ENCODE measurements at regions of chr15 and their contacts with region 1.

Region 1: DNA sequence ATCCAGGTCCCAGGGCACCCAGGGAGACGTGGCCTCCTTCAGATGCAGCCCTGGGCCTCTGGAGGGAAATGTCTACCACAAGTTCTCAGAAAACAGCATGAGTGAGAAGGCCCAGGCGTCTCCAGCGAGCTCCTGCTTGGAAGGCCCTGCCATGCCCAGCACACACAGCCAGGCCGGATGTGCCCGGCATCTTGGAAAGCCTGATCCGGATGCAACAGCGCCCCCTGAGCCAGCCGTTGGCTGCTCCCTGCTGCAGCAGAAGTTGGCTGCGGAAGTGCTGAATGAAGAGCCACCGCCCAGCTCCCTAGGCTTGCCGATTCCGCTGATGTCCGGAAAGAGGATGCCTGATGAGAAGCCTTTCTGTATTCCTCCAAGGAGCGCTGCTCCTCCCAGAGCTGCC is 856 bp downstream of the NPAP1 start:
- DNase-seq: no peak
- H3K4me3 ChIP-seq: no peak overlapping the region
- H3K27ac ChIP-seq: no peak overlapping the region
- H3K4me1 ChIP-seq: no peaks in the 10 kb centered on the region
- H3K27me3 ChIP-seq: no peaks in the 10 kb centered on the region
- CTCF ChIP-seq: no peak
- POLR2A ChIP-seq: no peak

Region 2: DNA sequence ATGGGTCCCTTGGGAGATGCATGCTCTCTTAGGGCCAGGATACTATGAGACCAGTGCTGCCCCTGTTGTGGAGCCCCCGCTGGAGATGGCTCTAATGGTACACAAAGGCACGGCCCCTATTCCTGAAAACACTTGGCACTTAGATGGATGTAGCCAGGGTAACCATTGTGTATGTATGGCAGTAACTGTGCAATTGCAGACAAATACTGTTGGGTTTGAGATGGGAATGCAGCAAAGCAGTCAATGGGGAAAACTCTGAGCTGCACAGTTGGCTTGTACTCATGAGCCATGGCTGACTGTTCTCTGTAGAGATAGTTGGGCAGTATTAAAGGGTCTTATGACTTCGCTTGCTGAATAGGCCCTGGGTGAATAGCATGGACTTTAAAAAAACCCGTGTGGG is 68.8 kb before region 1 on chr15:
- intact Hi-C with region 1: loop called (anchors 2 kb)
- DNase-seq: no peak
- H3K4me3 ChIP-seq: no peak overlapping the region
- H3K27ac ChIP-seq: no peak overlapping the region
- H3K4me1 ChIP-seq: no peaks in the 10 kb centered on the region
- H3K27me3 ChIP-seq: no peaks in the 10 kb centered on the region
- CTCF ChIP-seq: no peak
- POLR2A ChIP-seq: no peak

Region 3: DNA sequence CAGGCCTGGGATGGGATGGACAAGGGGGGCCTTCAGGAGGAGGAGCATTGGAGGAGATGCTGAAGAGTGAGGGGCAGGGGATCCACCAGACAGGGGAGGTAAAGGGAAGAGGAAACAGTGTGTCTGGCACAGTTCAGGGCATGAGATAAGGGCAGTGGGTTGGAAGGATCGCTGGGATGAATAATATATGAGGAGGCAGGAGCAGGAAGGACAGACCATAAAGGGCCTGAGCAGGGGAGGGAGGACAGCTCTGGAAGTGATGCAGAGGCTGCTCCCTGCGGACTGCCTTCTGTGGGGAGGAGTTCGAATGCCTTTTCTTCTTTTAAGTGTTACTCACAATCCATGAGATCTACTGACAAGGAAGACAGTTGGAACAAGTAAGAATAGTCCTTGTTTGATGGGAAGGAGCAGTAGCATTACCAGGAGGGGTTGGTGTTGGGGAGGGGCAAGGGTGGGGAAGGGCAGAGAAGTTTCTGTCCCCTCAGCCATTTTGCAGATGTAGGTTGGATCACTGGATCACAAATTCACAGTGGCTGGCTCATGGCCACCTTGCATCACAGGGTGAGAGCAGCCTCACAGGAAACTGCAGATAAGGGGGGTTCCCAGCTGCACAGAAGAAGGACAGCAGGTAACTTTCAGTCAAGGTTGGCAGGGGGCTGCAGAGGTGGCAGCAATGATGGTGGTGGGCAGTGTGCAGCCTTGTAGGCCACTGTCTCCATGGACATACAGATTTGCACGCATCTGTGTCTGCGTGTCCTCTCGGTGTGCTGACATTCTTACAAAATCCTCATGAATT is 186.5 kb after region 1 on chr15:
- intact Hi-C with region 1: no loop called
- DNase-seq: no peak
- H3K4me3 ChIP-seq: no peak overlapping the region
- H3K27ac ChIP-seq: no peak overlapping the region
- H3K4me1 ChIP-seq: no peaks in the 10 kb centered on the region
- H3K27me3 ChIP-seq: no peaks in the 10 kb centered on the region
- CTCF ChIP-seq: no peak
- POLR2A ChIP-seq: no peak